GM13977 (cell line): ENCODE measurements at regions of chr12 and their contacts with region 1.

Region 1: DNA sequence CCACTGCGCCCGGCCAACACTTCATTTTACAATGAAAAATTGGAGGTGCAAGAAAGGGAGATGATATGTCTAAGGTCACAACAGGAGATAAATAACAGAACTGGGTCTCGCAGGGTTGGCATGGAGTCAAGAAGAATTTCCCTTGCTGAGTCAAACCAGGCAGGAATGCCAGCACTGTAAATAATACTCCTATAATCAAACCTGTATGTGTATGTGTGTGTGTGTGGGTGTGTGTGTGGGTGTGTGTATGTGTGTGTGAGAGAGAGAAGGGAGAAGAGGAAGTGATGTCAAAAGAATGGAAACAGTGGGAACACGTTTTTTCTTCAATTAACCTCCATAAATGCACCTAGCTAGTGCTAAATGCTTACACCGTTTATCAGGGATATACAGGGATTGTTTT is 70.4 kb downstream of the TMEM116 start:
- DNase-seq: no peak
- CTCF ChIP-seq: no peak

Region 2: DNA sequence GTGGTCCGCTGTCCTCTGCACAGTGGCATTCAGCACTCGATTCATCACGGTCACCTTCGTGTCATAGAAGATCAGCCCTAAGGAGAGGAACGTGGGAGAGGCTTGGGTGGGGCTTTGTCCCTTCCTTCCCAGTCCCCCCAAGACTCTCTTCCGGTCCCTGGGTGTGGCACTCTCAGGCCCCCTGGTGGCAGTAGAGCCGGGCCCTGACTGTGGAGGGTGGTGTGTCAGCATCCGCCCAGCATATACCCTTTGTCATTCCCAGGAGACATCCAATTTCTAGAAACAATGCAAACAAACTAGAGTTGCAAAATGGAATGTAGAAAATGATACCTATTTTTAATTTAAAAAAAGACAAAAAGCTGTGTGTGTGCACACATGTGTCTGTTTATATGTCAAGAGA is 227.8 kb after region 1 on chr12:
- in situ Hi-C with region 1: loop called (anchors 25 kb)
- DNase-seq: no peak
- CTCF ChIP-seq: peak; percentile 63

Region 3: GRCh38 chr12:112382232-112382796 is 439.8 kb after region 1 on chr12 and contains the start of gene HECTD4:
- in situ Hi-C with region 1: loop called (anchors 25 kb)
- DNase-seq: peak; percentile 98
- CTCF ChIP-seq: no peak